Motor neuron (in vitro differentiated cells): ENCODE measurements at regions of chr4 and their contacts with region 1.

Region 1: DNA sequence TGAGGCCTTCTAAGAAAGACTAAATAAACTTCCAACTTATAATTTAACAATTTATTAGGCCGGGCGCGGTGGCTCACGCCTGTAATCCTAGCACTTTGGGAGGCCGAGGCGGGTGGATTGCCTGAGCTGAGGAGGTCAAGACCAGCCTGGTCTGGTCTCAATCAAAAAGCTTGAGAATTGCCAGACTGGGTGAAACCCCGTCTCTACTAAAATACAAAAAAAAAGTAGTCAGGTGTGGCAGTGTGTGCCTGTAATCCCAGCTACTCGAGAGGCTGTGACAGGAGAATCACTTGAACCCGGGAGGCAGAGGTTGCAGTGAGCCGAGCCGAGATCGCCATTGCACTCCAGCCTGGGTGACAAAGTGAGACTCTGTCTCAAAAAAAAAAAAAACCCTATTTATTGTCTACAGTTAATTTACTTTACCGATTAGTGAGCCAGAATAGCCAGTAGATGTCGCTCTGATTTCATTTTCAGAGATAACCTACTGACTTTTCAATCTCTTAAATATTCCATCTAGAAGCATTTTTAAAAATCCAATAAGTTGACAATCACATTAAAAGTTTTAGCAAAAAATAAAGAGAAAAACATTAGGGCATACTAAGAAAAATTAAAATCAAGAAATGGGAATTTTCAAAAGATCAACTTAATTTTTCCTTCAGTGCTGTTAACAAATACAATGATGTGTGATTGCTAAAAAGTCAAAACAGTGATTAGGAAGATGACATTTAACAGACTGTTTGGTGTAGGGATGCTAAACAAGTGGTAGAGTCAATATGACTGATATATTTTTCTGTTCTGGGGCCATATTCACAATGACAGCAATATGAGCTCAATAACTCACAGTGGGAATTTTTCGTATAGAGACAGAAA is 4.3 kb upstream of the SHROOM3 start:
- ATAC-seq: peak; percentile 33 to 77 (median 52)
- H3K4me3 ChIP-seq: no peak overlapping the region
- H3K27ac ChIP-seq: no peak overlapping the region
- H3K4me1 ChIP-seq: peaks cover 10 to 12% of the 10 kb centered on the region in 2 donors

Region 2: GRCh38 chr4:76499461-76499860 is 68.7 kb after region 1 on chr4:
- in situ Hi-C with region 1: loop called in 5 of 9 experiments (anchors 10 kb)
- ATAC-seq: no peak
- H3K4me3 ChIP-seq: no peak overlapping the region
- H3K27ac ChIP-seq: no peak overlapping the region
- H3K4me1 ChIP-seq: peaks cover 20 to 26% of the 10 kb centered on the region in 2 donors

Region 3: DNA sequence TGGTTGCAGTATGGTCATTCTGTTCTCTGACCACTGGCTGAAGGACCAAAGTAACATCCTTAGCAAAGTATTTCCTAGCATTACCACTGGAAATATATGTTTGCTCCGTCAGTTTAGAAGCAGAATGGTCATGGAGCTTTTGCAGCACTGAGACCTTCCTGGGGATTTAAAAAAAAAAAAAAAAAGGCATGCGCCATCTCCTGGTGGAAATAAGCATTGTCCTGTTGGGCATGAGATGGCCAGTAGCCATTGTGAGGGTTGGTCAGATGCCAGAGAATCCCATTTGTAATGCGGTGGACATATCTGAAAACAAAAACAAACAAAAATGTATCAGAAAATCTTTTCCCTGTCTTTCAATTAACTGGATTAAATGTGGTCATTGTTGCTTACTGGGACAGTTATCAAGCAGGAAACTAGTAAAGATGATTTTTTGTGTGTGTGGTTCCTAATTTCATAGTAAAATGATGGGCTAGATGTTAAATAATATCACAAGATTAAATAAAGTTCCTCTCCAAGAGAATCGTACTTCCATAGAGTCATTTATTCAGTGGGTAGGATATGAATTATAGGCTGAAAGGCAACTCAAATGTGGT is 327.6 kb after region 1 on chr4:
- in situ Hi-C with region 1: loop called in 1 of 9 experiments (anchors 10 kb)
- ATAC-seq: peak; percentile 50 to 86 (median 64)
- H3K4me3 ChIP-seq: no peak overlapping the region
- H3K27ac ChIP-seq: no peak overlapping the region
- H3K4me1 ChIP-seq: no peaks in the 10 kb centered on the region